ENCODE measurements at regions of chr5 and their contacts with region 1.

Region 1: GRCh38 chr5:174311531-174312269 is 266.2 kb downstream of the NSG2 start:
- DNase-seq: peak; percentile 64
- H3K4me3 ChIP-seq: peak overlapping the region; percentile 26 to 42 (median 31)
- H3K27ac ChIP-seq: no peak overlapping the region
- H3K4me1 ChIP-seq: peaks cover 0 to 7% (median 4%) of the 10 kb centered on the region in 4 donors
- H3K27me3 ChIP-seq: peaks cover 28% of the 10 kb centered on the region
- CTCF ChIP-seq: peak; percentile 46 to 88 (median 81)
- EP300 ChIP-seq: no peak
- POLR2A ChIP-seq: no peak

Region 2: GRCh38 chr5:173615884-173616576 is 695.7 kb before region 1 on chr5:
- in situ Hi-C with region 1: loop called (anchors 25 kb)
- intact Hi-C with region 1: no loop called
- DNase-seq: peak; percentile 70
- H3K4me3 ChIP-seq: peak overlapping the region; percentile 93 to 100 (median 96)
- H3K27ac ChIP-seq: peak overlapping the region; percentile 95 to 98 (median 96)
- H3K4me1 ChIP-seq: peaks cover 13 to 28% (median 20%) of the 10 kb centered on the region in 4 donors
- H3K27me3 ChIP-seq: no peaks in the 10 kb centered on the region
- CTCF ChIP-seq: peak; percentile 56 to 81 (median 70)
- EP300 ChIP-seq: no peak
- POLR2A ChIP-seq: no peak

Region 3: GRCh38 chr5:174045470-174046025 is 266.2 kb before region 1 on chr5 and contains the start of gene NSG2:
- in situ Hi-C with region 1: loop called (anchors 10 to 25 kb)
- intact Hi-C with region 1: no loop called
- DNase-seq: peak; percentile 64
- H3K4me3 ChIP-seq: no peak within 1 kb of the TSS
- H3K27ac ChIP-seq: no peak within 1 kb of the TSS
- H3K4me1 ChIP-seq: no peaks in the 10 kb centered on the region
- H3K27me3 ChIP-seq: no peaks in the 10 kb centered on the region
- CTCF ChIP-seq: peak in 4 of 5 experiments; percentile 24 to 40 (median 34)
- EP300 ChIP-seq: no peak
- POLR2A ChIP-seq: no peak
- total RNA-seq, gene NSG2: 1.4 to 4.0 TPM in 2 of 4 donors, not detected in the others

Region 4: DNA sequence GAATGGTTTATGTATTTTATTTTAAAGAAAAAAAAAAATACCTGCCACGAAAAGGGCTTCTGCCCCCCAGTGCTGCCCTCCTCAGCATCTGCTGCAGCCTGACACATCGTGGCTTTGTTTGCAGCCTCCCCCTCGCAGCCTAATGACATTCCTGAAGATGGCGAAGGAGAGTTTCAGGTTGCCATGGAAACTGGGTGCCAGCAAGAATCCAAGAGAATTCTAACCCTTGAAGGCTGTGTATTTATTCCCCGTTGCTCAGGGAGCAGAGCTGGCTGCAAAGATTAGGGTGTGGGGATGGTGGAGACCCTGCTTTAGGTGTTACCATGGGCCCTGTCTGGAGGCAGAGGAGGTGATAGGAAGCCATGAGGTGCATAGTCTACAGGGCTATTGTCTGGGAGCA is 139.5 kb before region 1 on chr5:
- in situ Hi-C with region 1: no loop called
- intact Hi-C with region 1: no loop called
- DNase-seq: no peak
- H3K4me3 ChIP-seq: no peak overlapping the region
- H3K27ac ChIP-seq: no peak overlapping the region
- H3K4me1 ChIP-seq: no peaks in the 10 kb centered on the region
- H3K27me3 ChIP-seq: no peaks in the 10 kb centered on the region
- CTCF ChIP-seq: no peak
- EP300 ChIP-seq: no peak
- POLR2A ChIP-seq: no peak

Measured in transverse colon (tissue), 4 donors.